Heart right ventricle (tissue), 16 donors: ENCODE measurements at regions of chr4 and their contacts with region 1.

Region 1: GRCh38 chr4:73258686-73259570 is at the start of gene ANKRD17:
- DNase-seq: peak; percentile 90 to 93
- ATAC-seq: peak; percentile 91 to 96 (median 93)
- H3K4me3 ChIP-seq: peak within 1 kb of the TSS; percentile 68 to 96 (median 82)
- H3K27ac ChIP-seq: peak within 1 kb of the TSS; percentile 93 to 100 (median 98)
- H3K4me1 ChIP-seq: peaks cover 0 to 65% (median 50%) of the 10 kb centered on the region in 9 donors
- H3K27me3 ChIP-seq: no peaks in the 10 kb centered on the region
- CTCF ChIP-seq: peak in 5 of 9 donors; percentile 18 to 30 (median 27)
- total RNA-seq, gene ANKRD17: 47.4 to 71.7 (median 63.7) TPM

Region 2: DNA sequence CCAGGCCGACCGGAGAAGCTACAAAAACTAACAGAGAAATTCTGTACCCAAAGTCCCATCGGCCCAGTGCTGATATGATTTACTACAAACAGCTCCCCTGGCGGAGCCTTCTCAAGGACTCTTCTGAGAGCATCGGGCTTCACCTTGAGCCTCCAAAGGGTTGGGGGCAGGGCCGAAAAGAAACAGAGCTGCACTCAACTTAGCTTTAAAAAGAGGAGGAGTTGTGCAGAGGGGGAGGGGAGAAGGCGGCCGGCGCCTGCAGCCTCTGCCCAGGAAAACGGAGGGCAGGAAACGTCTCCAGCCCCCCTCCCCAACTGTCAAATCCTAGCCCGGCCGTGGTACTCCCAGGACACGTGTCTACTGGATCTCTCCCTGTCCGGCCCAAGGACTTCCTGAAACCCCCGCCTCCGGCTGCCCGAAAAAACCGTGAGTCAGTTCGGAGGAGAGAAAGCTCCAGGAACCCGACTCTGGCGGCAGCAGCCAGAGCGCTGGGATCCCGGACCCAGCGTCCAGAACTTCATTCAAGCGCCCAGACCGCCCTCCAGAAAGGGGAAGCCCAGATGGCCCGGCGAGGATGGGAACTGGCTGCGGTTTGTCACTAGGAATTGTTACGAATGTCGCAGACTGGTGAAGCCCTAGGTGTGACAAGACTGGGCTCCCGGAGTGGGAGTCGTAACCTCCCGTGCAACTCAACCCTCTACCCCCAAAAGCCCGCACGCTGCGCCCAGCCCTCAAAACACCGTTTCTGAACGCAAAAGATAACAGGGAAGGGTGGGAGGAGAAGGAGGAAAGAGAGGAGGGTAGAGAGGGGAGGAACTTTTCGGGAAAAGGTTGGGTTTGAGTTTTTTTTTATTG is 690.9 kb before region 1 on chr4:
- intact Hi-C with region 1: loop called in 1 of 10 experiments (anchors 10 kb)
- DNase-seq: peak; percentile 40 to 51
- ATAC-seq: peak; percentile 50 to 85 (median 76)
- H3K4me3 ChIP-seq: peak overlapping the region; percentile 36 to 77 (median 60)
- H3K27ac ChIP-seq: peak overlapping the region in 8 of 10 donors; percentile 33 to 73 (median 47)
- H3K4me1 ChIP-seq: peaks cover 0 to 24% (median 8%) of the 10 kb centered on the region in 9 donors
- H3K27me3 ChIP-seq: peaks cover 0 to 31% (median 0%) of the 10 kb centered on the region in 7 donors
- CTCF ChIP-seq: peak in 5 of 9 donors; percentile 24 to 40 (median 31)

Region 3: GRCh38 chr4:73069338-73070073 is 189.4 kb before region 1 on chr4 and contains the start of gene COX18:
- intact Hi-C with region 1: loop called in 7 of 10 experiments (anchors 1 to 5 kb)
- DNase-seq: peak; percentile 97 to 98
- ATAC-seq: peak; percentile 97 to 99 (median 98)
- H3K4me3 ChIP-seq: peak within 1 kb of the TSS; percentile 62 to 99 (median 78)
- H3K27ac ChIP-seq: peak within 1 kb of the TSS; percentile 86 to 99 (median 94)
- H3K4me1 ChIP-seq: peaks cover 0 to 39% (median 29%) of the 10 kb centered on the region in 9 donors
- H3K27me3 ChIP-seq: no peaks in the 10 kb centered on the region
- CTCF ChIP-seq: peak in 1 of 9 donors; percentile 7
- total RNA-seq, gene COX18: 16.8 to 22.3 (median 18.1) TPM

Region 4: GRCh38 chr4:73099143-73099542 is 159.8 kb before region 1 on chr4:
- intact Hi-C with region 1: loop called in 1 of 10 experiments (anchors 10 kb)
- DNase-seq: no peak
- ATAC-seq: peak in 6 of 8 donors; percentile 15 to 57 (median 31)
- H3K4me3 ChIP-seq: no peak overlapping the region
- H3K27ac ChIP-seq: no peak overlapping the region
- H3K4me1 ChIP-seq: no peaks in the 10 kb centered on the region
- H3K27me3 ChIP-seq: no peaks in the 10 kb centered on the region
- CTCF ChIP-seq: no peak

Region 5: GRCh38 chr4:73142995-73143547 is 115.9 kb before region 1 on chr4:
- intact Hi-C with region 1: loop called in 3 of 10 experiments (anchors 5 to 10 kb)
- DNase-seq: no peak
- ATAC-seq: no peak
- H3K4me3 ChIP-seq: no peak overlapping the region
- H3K27ac ChIP-seq: no peak overlapping the region
- H3K4me1 ChIP-seq: peaks cover 0 to 6% (median 0%) of the 10 kb centered on the region in 9 donors
- H3K27me3 ChIP-seq: no peaks in the 10 kb centered on the region
- CTCF ChIP-seq: peak in 7 of 9 donors; percentile 7 to 49 (median 19)

Region 6: DNA sequence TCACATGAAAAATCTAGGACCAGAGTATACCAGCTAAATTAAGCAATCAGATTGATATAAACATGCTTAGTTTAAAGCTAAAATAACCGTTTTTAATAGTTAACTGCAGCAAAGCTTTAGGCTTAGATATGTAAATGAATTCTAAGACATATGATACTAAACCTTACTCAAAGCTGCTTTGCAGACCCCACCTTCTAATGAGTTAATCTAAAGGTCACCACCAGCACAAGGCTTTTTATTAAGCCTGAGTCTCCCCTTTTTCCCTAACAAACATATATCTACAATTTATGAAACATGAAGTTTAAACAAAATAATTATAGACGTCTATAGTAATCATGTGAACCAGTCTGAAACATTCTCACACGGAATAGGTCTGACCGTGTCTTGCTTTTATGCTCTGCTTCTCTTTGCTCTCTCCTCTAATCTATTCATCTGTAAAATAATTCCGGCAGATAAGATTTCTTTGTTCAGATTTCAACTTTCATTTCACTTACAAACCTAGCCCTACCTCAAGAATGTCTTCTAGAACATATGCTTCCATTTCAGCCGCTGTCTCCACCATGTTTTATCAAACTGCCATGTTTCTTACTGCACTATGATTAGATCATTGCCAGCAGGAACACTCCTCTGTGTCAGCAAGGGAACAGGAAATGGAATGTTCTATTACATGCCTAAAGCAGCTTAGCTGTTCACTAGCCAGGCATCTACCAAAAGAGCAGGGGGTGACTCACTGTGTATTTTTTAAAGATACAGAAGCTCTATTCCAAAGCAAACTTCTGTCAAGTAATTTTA is 36.3 kb before region 1 on chr4:
- intact Hi-C with region 1: loop called in 3 of 10 experiments (anchors 5 kb)
- DNase-seq: peak in 1 of 2 donors; percentile 87
- ATAC-seq: peak; percentile 98 to 100 (median 100)
- H3K4me3 ChIP-seq: peak overlapping the region; percentile 41 to 68 (median 57)
- H3K27ac ChIP-seq: peak overlapping the region; percentile 40 to 89 (median 82)
- H3K4me1 ChIP-seq: peaks cover 0 to 57% (median 47%) of the 10 kb centered on the region in 9 donors
- H3K27me3 ChIP-seq: no peaks in the 10 kb centered on the region
- CTCF ChIP-seq: no peak

Region 7: GRCh38 chr4:73718375-73719373 is 459.7 kb after region 1 on chr4:
- intact Hi-C with region 1: no loop called
- DNase-seq: no peak
- ATAC-seq: no peak
- H3K4me3 ChIP-seq: no peak overlapping the region
- H3K27ac ChIP-seq: peak overlapping the region in 2 of 10 donors; percentile 24 to 80
- H3K4me1 ChIP-seq: peaks cover 0 to 43% (median 0%) of the 10 kb centered on the region in 9 donors
- H3K27me3 ChIP-seq: no peaks in the 10 kb centered on the region
- CTCF ChIP-seq: no peak